Spleen (tissue), 13 donors: ENCODE measurements at regions of chr15 and their contacts with region 1.

Region 1: GRCh38 chr15:52326756-52327155 is 31.2 kb upstream of the MYO5C start:
- DNase-seq: no peak
- H3K4me3 ChIP-seq: no peak overlapping the region
- H3K27ac ChIP-seq: no peak overlapping the region
- H3K4me1 ChIP-seq: peaks cover 0 to 7% (median 6%) of the 10 kb centered on the region in 6 donors
- H3K27me3 ChIP-seq: no peaks in the 10 kb centered on the region
- CTCF ChIP-seq: no peak
- POLR2A ChIP-seq: no peak

Region 2: DNA sequence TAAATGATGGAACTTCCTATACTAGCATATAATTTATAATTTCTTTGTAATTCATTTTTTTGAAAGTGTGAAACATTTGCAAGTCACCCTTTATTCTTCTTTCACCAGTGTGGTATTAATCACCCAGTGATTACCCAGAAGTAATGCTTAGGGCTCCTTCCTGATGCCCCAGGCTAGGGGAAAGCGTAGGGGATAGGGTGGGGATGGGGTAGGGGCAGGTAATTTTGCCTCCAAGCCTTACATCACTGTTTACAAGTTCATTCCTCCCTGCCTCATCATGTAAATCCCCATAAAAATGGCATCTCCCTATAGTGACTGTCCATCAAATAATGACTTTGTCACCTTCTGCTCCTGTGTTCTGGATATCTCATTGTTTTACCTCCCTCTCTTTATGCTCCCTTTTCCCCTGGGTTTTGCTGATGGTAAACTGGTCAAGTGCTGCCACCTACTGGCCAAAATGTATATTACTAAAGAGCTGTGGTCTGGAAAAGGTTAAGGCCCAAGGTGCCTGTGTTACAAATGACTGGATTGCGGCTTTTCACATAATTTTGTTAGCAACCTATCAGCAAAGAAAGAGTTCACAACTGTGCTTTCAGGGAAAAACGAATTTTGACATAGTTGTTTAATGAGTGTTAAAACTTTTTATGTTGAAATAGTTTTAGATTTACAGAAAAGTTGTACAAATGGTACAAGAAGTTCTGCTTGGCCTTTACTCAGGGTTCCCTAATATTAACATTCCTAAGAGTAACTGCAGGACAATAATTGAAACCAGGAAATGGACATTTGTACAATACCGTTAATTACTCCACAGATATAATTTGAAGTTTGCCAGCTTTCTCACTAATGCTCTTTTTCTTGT is 408.7 kb after region 1 on chr15:
- intact Hi-C with region 1: loop called (anchors 10 kb)
- DNase-seq: no peak
- H3K4me3 ChIP-seq: no peak overlapping the region
- H3K27ac ChIP-seq: no peak overlapping the region
- H3K4me1 ChIP-seq: peaks cover 0 to 28% (median 8%) of the 10 kb centered on the region in 6 donors
- H3K27me3 ChIP-seq: no peaks in the 10 kb centered on the region
- CTCF ChIP-seq: peak; percentile 67 to 92 (median 86)
- POLR2A ChIP-seq: no peak